ENCODE measurements at regions of chr14 and their contacts with region 1.

Region 1: DNA sequence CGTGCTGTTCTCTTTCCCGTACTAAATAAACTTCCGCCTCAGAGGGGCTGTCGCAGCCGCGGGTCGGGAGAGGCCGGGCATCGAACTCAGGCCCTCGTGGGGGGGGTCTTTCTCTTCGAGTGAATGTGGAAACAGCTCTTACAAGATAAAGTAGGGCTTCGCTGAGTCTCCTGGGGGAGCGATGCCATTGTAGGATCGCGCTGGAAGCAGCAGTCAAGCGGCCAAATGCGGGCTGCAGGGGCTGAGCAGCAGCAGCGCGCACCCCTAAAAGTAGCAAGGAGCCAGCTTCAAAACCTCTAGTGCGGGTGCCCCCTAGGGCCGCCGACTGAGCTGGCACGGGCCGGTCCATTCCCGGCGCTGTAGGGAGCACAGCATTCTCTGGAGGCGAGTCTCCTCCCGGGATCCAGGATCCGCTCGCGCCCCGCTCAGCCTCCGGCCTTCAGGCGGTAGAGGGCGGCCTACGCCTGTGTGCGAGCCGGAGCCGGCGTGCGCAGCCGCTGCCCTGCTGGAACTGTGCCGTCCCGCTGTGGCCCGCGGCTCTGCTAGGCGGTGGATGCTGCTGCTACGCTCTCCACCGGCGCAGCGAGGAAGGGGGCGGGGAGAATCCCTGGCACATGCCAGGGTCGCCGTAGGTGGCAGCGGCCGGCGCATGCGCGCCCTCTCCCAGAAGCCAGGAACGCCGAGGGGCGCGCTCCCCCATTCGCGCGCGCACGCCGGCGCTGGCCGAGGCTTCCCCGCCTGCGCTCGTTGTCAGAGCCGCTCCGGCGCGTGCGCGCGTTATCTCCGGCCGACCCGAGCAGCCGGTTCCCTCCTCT is at the start of gene FUT8:
- DNase-seq: peak; percentile 99
- ATAC-seq: peak; percentile 95
- total RNA-seq, gene FUT8: 11.5 TPM

Region 2: GRCh38 chr14:65824285-65824977 is 412.2 kb after region 1 on chr14:
- intact Hi-C with region 1: loop called (anchors 5 kb)
- DNase-seq: no peak
- ATAC-seq: peak; percentile 76

Region 3: GRCh38 chr14:65937079-65937959 is 525.1 kb after region 1 on chr14:
- intact Hi-C with region 1: loop called (anchors 10 kb)
- DNase-seq: no peak
- ATAC-seq: no peak

Region 4: DNA sequence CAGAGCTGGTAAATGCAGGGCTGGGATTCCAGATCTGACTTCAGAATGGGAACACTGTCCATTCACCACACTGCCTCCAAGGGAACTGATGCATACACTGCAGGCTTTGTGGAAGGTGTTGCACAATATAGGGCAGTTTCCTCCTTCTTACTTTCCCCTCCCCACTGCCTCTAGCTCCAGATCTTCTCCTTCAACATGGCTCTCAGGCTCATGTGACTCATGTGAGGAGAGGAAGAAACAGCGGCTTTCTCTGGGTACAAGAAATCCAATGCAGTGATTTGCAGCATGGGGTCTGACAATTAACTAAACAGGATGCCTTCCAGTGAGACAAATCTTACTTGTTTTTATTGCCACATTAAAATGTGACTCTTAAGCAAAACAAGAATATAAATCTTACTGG is 626.4 kb after region 1 on chr14:
- intact Hi-C with region 1: no loop called
- DNase-seq: no peak
- ATAC-seq: peak; percentile 92

Measured in left ventricle myocardium superior (tissue), 1 donor.